ENCODE measurements at regions of chr4 and their contacts with region 1.

Region 1: DNA sequence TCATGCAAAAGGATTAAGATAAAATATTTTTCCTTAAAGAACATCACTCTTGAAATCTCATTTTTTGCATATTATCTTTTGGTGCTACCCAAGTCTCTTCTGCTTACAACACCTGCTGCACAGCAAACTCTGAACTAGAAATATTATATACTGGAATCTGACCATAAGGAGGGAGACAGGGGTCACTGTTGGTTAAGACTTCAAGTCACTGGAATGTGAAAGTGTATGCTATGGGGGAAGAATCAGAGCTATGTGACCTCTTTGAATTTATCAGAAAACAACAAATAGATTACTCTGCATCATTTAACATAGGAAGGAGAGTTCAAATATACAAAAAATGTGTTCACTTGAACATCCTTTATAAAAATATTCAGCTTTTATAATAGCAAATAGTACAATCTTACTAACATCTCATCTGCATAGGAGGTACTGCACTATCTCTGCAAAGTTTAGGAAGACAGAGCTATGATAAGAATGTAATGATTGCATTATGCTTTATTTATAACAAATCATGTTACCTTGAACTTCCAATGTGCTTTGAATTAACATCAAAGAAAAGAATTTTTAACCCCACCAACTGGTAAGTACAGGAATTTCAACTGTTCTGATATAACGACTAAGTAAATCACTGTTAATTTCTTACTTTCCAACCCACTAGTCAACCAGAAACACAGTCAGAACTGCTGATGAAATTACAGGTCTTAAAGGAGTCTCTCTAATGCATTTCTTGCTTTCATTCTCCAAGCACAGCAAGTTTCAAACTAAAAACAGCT is 69.8 kb downstream of the ZNF827 start:
- DNase-seq: no peak
- ATAC-seq: peak; percentile 80
- H3K4me3 ChIP-seq: no peak overlapping the region
- H3K27ac ChIP-seq: no peak overlapping the region; the same call in 1 of the 2 replicates
- H3K4me1 ChIP-seq: peaks cover 45% of the 10 kb centered on the region
- H3K27me3 ChIP-seq: no peaks in the 10 kb centered on the region
- CTCF ChIP-seq: peak in 2 of 3 experiments; percentile 8 to 19; a peak in 2 of 6 replicates
- EP300 ChIP-seq: no peak
- POLR2A ChIP-seq: no peak
- RAD21 ChIP-seq: peak; percentile 14; the same call in 1 of the 2 replicates

Region 2: GRCh38 chr4:145773581-145774234 is 95.1 kb before region 1 on chr4:
- CTCF ChIA-PET with region 1: no interaction called
- POLR2A ChIA-PET with region 1: no interaction called
- RAD21 ChIA-PET with region 1: no interaction called
- SMC1A ChIA-PET with region 1: no interaction called
- in situ Hi-C with region 1: no loop called
- intact Hi-C with region 1: no loop called
- DNase-seq: peak; percentile 37
- ATAC-seq: peak; percentile 92
- H3K4me3 ChIP-seq: no peak overlapping the region; the same call in 1 of the 2 replicates
- H3K27ac ChIP-seq: peak overlapping the region; percentile 38; the same call in 1 of the 2 replicates
- H3K4me1 ChIP-seq: peaks cover 35% of the 10 kb centered on the region
- H3K27me3 ChIP-seq: no peaks in the 10 kb centered on the region
- CTCF ChIP-seq: no peak
- EP300 ChIP-seq: no peak; a peak in 1 of 4 replicates
- POLR2A ChIP-seq: no peak
- RAD21 ChIP-seq: no peak

Region 3: DNA sequence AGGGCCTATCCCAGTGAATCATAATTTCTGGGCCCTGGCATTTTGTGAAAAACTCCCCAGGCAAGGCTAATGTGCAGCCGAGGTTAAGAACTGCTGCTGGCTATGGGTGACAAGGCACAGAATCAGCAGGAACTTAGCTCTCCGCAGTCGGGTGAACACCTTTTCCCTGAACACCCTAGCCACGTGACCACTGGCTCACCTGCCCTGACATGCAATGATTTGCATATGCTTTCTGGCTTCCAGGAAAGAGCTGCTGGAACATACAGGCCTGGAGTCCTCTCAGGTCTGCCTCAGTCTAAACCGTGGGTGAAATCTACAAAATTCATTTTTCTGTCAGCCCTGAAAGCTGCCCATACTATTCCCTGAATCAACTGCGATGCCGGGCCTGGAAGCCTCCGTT is 13.2 kb after region 1 on chr4:
- CTCF ChIA-PET with region 1: interaction called, 7 read pairs
- POLR2A ChIA-PET with region 1: interaction called, 5 read pairs
- RAD21 ChIA-PET with region 1: interaction called, 5 read pairs
- SMC1A ChIA-PET with region 1: interaction called, 10 read pairs
- in situ Hi-C with region 1: no loop called
- intact Hi-C with region 1: no loop called
- DNase-seq: no peak
- ATAC-seq: peak; percentile 57
- H3K4me3 ChIP-seq: peak overlapping the region; percentile 40; the same call in 1 of the 2 replicates
- H3K27ac ChIP-seq: peak overlapping the region; percentile 45
- H3K4me1 ChIP-seq: peaks cover 32% of the 10 kb centered on the region
- H3K27me3 ChIP-seq: no peaks in the 10 kb centered on the region
- CTCF ChIP-seq: no peak
- EP300 ChIP-seq: no peak
- POLR2A ChIP-seq: no peak
- RAD21 ChIP-seq: no peak

Measured in GM12878 (cell line).